ENCODE measurements at regions of chr18 and their contacts with region 1.

Region 1: GRCh38 chr18:41096504-41096903 is 858.5 kb upstream of the PIK3C3 start:
- DNase-seq: peak; percentile 37
- ATAC-seq: peak; percentile 68
- H3K4me3 ChIP-seq: no peak overlapping the region
- H3K27ac ChIP-seq: no peak overlapping the region
- H3K4me1 ChIP-seq: no peaks in the 10 kb centered on the region
- H3K27me3 ChIP-seq: no peaks in the 10 kb centered on the region
- CTCF ChIP-seq: peak; percentile 54

Region 2: GRCh38 chr18:39841482-39842365 is 1254.8 kb before region 1 on chr18:
- CTCF ChIA-PET with region 1: no interaction called
- POLR2A ChIA-PET with region 1: no interaction called
- intact Hi-C with region 1: loop called (anchors 10 kb)
- DNase-seq: peak; percentile 35
- ATAC-seq: peak; percentile 96
- H3K4me3 ChIP-seq: peak overlapping the region; percentile 73
- H3K27ac ChIP-seq: no peak overlapping the region
- H3K4me1 ChIP-seq: no peaks in the 10 kb centered on the region
- H3K27me3 ChIP-seq: no peaks in the 10 kb centered on the region
- CTCF ChIP-seq: peak; percentile 36; the same call in 1 of the 2 replicates

Region 3: GRCh38 chr18:40437517-40437916 is 659.0 kb before region 1 on chr18:
- CTCF ChIA-PET with region 1: no interaction called
- POLR2A ChIA-PET with region 1: no interaction called
- intact Hi-C with region 1: loop called (anchors 5 kb)
- DNase-seq: no peak
- ATAC-seq: no peak
- H3K4me3 ChIP-seq: no peak overlapping the region
- H3K27ac ChIP-seq: no peak overlapping the region
- H3K4me1 ChIP-seq: no peaks in the 10 kb centered on the region
- H3K27me3 ChIP-seq: no peaks in the 10 kb centered on the region
- CTCF ChIP-seq: 0 out of 2 replicates have a peak, but pooled peaks have one; percentile 11

Region 4: DNA sequence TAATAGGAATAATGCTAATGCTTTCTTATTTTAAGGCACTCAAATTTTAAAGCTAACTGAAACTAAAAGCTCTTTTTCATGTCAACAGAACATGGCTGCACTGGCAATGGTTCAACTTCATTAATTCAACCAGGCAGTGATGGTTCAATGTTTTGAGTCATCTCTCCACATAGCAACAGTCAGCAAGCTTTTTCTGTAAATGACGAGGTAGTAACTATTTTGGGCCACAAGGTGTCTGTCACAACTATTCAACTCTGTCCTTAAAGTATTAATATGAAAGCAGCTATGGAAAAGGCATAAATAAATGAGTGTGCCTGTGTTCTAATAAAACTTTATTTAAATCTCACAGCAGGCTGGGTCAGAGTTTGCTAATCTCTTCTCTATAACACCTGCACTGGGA is 567.0 kb before region 1 on chr18:
- CTCF ChIA-PET with region 1: no interaction called
- POLR2A ChIA-PET with region 1: no interaction called
- intact Hi-C with region 1: loop called (anchors 10 kb)
- DNase-seq: peak; percentile 43
- ATAC-seq: peak; percentile 45; the same call in 1 of the 2 replicates
- H3K4me3 ChIP-seq: no peak overlapping the region
- H3K27ac ChIP-seq: no peak overlapping the region
- H3K4me1 ChIP-seq: peaks cover 3% of the 10 kb centered on the region; the same call in 1 of the 2 replicates
- H3K27me3 ChIP-seq: no peaks in the 10 kb centered on the region
- CTCF ChIP-seq: peak; percentile 37; the same call in 1 of the 2 replicates

Region 5: GRCh38 chr18:41144441-41144840 is 47.9 kb after region 1 on chr18:
- CTCF ChIA-PET with region 1: no interaction called
- POLR2A ChIA-PET with region 1: no interaction called
- intact Hi-C with region 1: no loop called
- DNase-seq: no peak
- ATAC-seq: peak; percentile 31; the same call in 1 of the 2 replicates
- H3K4me3 ChIP-seq: no peak overlapping the region
- H3K27ac ChIP-seq: no peak overlapping the region
- H3K4me1 ChIP-seq: no peaks in the 10 kb centered on the region
- H3K27me3 ChIP-seq: no peaks in the 10 kb centered on the region
- CTCF ChIP-seq: no peak

Region 6: GRCh38 chr18:41378598-41378997 is 282.1 kb after region 1 on chr18:
- CTCF ChIA-PET with region 1: interaction called, 4 read pairs
- POLR2A ChIA-PET with region 1: no interaction called
- intact Hi-C with region 1: loop called (anchors 2 kb)
- DNase-seq: peak; percentile 50
- ATAC-seq: peak; percentile 78
- H3K4me3 ChIP-seq: no peak overlapping the region
- H3K27ac ChIP-seq: no peak overlapping the region
- H3K4me1 ChIP-seq: no peaks in the 10 kb centered on the region
- H3K27me3 ChIP-seq: no peaks in the 10 kb centered on the region
- CTCF ChIP-seq: peak; percentile 51

Region 7: DNA sequence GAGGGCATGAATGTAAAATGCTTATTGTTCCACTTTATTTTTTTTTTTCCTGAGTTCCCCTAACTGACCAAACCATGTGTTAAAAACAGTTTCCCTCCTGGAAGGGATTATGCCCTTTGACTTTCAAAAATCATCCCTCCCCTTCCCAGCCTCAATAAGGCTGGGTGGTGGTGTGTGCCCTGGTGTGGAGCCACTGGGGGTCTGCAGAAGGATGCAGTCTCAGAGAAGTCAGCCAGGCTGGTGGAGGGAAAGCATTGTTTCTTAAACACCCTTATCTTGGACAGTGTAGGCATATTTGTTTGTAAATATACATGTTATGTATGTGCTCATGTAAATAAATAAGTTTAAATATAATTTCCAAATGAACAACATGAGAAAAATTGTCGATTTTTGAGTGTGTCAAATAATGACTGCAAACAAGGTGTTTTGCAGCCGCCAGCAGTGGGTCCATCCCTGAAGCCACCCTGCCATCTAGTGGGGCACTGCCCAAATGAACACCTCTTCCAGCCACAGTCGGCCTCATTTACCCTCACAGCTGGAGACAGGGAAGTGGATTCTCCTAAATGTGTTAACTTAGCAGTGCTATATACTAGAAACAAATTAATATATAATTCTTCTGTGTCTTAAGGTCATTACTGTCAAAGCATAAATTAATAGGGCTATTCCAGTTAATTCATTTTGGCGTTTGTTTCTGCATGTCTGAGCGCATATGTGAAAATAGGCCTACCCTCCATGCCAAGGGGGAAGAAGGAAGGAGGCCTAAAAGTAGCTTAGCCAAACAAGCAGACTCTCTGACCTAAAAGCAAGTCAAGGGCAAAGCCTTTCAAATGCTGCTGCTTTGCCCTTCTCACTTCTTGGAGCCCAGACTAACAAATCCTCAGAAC is 648.9 kb after region 1 on chr18:
- CTCF ChIA-PET with region 1: no interaction called
- POLR2A ChIA-PET with region 1: no interaction called
- intact Hi-C with region 1: loop called (anchors 10 kb)
- DNase-seq: peak; percentile 57
- ATAC-seq: peak; percentile 93
- H3K4me3 ChIP-seq: no peak overlapping the region
- H3K27ac ChIP-seq: no peak overlapping the region
- H3K4me1 ChIP-seq: peaks cover 10% of the 10 kb centered on the region; the same call in 1 of the 2 replicates
- H3K27me3 ChIP-seq: no peaks in the 10 kb centered on the region
- CTCF ChIP-seq: peak; percentile 65

Measured in PC-3 (cell line).